Vagina (tissue), 2 donors: ENCODE measurements at regions of chrX and their contacts with region 1.

Region 1: DNA sequence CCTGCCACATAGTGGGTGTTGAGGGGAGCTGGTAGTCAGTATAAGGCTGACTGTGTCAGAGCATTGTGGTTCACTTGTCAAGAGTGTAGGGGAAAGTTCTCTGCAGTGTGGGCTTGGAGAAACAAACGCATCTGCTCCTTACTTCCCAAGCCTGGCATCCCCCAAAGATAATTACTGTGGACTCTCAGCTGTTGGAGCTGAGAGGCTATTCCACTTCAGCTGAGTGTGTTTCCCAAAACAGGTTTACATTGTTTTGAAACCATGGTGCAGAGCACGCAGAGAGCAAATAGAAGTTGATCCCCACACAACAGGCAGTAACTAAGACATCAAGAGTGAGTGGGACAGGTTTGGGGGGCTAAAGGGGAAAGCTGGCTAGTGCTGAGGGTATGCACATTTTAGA is 181.0 kb upstream of the EOLA2 start:
- DNase-seq: no peak
- H3K4me3 ChIP-seq: no peak overlapping the region
- H3K27ac ChIP-seq: no peak overlapping the region
- H3K4me1 ChIP-seq: no peaks in the 10 kb centered on the region
- H3K27me3 ChIP-seq: no peaks in the 10 kb centered on the region
- CTCF ChIP-seq: no peak
- POLR2A ChIP-seq: no peak

Region 2: GRCh38 chrX:149987613-149988012 is 131.7 kb before region 1 on chrX:
- intact Hi-C with region 1: no loop called
- DNase-seq: no peak
- H3K4me3 ChIP-seq: no peak overlapping the region
- H3K27ac ChIP-seq: no peak overlapping the region
- H3K4me1 ChIP-seq: no peaks in the 10 kb centered on the region
- H3K27me3 ChIP-seq: no peaks in the 10 kb centered on the region
- CTCF ChIP-seq: no peak
- POLR2A ChIP-seq: no peak

Region 3: DNA sequence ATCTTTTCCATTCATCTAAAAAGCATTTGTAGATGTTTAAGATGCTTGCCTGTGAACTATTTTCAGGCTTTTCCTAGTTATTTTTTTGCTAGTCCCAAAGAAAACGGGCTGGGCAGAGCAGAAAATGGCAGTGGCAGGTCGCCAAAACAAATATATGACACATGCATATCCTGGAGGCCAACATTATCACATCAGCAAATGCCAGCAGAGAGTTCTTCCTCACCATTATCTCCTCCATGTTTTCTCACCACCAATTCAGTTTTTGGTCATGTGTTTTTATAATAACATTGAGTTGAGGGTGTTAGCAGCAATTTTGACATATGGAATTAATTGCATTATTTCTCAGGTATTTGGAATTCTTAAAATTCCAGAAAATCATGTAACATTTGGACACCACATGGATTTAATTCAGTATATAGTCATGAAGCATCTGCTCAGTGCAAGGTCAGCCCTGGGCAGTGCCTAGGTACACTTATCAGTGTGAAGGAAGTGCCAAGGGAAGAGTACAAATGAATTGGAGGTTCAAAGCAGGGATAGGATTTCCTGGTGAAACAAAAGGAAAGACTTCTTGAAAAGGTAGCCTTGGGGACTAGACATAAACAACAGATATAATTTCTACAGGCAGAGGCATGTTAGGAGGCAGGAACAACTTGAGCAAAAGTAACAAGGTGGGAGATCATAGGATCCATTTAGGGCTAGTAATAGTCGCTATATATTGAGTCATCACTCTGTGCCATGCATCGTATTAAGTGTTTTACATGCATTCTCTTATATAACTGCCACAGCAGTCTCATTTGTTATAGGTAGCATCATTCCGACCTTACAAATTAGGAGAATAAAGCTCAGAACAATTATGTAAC is 82.9 kb before region 1 on chrX:
- intact Hi-C with region 1: no loop called
- DNase-seq: no peak
- H3K4me3 ChIP-seq: no peak overlapping the region
- H3K27ac ChIP-seq: no peak overlapping the region
- H3K4me1 ChIP-seq: no peaks in the 10 kb centered on the region
- H3K27me3 ChIP-seq: no peaks in the 10 kb centered on the region
- CTCF ChIP-seq: no peak
- POLR2A ChIP-seq: no peak

Region 4: GRCh38 chrX:150094996-150095395 is 24.3 kb before region 1 on chrX:
- intact Hi-C with region 1: loop called (anchors 1 kb)
- DNase-seq: no peak
- H3K4me3 ChIP-seq: no peak overlapping the region
- H3K27ac ChIP-seq: no peak overlapping the region
- H3K4me1 ChIP-seq: no peaks in the 10 kb centered on the region
- H3K27me3 ChIP-seq: no peaks in the 10 kb centered on the region
- CTCF ChIP-seq: no peak
- POLR2A ChIP-seq: no peak